ENCODE measurements at regions of chr3 and their contacts with region 1.

Region 1: DNA sequence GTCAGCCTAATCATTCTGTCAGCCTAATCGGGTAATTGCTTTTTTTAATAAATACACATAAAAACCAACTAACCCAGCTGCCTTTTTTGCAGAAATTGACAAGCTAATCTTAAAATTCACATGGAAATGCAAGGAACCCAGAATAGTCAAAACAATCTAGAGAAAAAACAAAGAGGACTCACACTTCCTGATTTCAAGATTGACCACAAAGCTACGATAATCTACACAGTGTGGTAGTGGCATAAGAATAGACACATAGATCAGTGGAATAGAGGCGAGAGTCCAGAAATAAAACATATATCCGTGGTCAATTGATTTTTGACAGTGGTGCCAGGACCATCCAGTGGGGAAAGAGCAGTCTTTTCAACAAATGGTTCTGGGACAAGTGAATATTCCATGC is 2.4 kb upstream of the C3orf20 start:
- DNase-seq: no peak
- ATAC-seq: no peak
- H3K4me3 Mint-ChIP-seq: no peak overlapping the region
- H3K27ac Mint-ChIP-seq: peak overlapping the region; percentile 20
- H3K4me1 Mint-ChIP-seq: no peaks in the 10 kb centered on the region
- H3K27me3 Mint-ChIP-seq: no peaks in the 10 kb centered on the region
- CTCF ChIP-seq: no peak

Region 2: DNA sequence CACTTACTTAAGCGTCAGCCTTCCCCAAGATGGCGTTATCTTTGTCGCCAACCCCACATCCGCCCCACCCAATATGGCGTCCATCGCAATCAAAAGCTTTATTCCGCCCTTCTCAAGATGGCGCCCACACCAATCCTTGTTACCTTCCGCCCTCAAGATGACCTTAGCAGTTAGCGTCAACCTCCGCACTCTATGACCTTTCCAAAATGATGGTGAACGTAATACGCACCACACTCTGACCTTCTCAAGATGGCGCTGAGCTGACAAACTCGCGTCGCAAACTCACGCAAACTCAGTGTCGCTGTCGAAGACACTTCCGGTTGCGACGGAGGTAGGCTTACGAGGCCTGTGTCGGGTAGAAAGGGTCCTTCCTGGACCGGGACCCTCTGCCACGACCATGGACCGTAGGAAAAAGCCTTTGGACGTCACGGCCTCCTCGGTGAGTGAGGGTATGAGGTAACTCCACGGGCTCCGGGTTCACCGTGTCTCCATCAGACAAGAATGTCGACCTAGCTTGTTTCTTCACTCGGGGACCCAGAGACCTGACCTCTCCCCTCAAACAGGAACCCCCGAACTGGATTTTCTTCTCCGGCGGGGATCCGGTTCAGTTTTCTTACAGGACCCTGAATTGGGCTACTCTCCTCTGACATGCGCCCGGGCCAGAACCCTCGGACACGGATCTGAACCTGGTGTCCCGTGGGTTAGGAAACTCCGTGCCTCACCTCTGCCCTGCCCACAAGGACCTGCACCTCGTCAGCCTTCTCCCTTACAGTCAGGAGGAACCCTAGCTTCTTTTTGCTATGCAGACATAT is 20.9 kb before region 1 on chr3 and contains the start of gene CCDC174:
- CTCF ChIA-PET with region 1: interaction called, 3 read pairs
- POLR2A ChIA-PET with region 1: interaction called, 17 read pairs
- intact Hi-C with region 1: no loop called
- DNase-seq: peak; percentile 97
- ATAC-seq: peak; percentile 99
- H3K4me3 Mint-ChIP-seq: peak within 1 kb of the TSS; percentile 97
- H3K27ac Mint-ChIP-seq: peak within 1 kb of the TSS; percentile 98
- H3K4me1 Mint-ChIP-seq: peaks cover 35% of the 10 kb centered on the region
- H3K27me3 Mint-ChIP-seq: no peaks in the 10 kb centered on the region
- CTCF ChIP-seq: no peak
- total RNA-seq, gene CCDC174: 14.2 to 16.2 TPM

Region 3: DNA sequence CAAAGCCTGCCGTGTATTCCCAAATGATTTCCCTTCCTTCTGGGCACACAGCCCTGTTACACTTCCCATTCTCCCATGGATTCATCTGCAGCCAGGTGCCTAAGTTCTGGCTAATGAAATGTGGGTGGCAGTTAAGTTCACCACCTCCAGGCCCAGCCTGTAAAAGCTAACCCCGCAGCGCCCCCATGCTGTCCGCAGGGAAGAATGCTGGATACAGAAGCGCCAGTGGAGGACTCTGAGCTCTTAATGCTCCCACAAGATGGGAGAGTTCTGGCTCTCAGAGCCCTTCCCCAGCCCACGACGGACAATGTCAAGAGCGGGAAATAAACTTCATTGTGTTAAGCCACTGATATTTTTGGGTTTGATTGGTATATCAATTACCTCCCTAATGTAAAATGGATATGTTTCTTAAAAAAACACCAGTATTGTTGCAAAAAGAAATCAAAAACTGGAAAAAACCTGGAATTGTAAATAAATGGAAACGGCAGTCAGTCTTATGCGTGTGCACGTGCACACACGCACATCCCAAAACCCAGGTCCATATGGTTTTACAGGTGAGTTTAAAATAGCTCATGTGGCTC is 108.4 kb after region 1 on chr3:
- CTCF ChIA-PET with region 1: interaction called, 12 read pairs
- POLR2A ChIA-PET with region 1: no interaction called
- intact Hi-C with region 1: no loop called
- DNase-seq: peak; percentile 66
- ATAC-seq: no peak
- H3K4me3 Mint-ChIP-seq: no peak overlapping the region
- H3K27ac Mint-ChIP-seq: no peak overlapping the region
- H3K4me1 Mint-ChIP-seq: no peaks in the 10 kb centered on the region
- H3K27me3 Mint-ChIP-seq: peaks cover 2% of the 10 kb centered on the region
- CTCF ChIP-seq: peak; percentile 69

Region 4: DNA sequence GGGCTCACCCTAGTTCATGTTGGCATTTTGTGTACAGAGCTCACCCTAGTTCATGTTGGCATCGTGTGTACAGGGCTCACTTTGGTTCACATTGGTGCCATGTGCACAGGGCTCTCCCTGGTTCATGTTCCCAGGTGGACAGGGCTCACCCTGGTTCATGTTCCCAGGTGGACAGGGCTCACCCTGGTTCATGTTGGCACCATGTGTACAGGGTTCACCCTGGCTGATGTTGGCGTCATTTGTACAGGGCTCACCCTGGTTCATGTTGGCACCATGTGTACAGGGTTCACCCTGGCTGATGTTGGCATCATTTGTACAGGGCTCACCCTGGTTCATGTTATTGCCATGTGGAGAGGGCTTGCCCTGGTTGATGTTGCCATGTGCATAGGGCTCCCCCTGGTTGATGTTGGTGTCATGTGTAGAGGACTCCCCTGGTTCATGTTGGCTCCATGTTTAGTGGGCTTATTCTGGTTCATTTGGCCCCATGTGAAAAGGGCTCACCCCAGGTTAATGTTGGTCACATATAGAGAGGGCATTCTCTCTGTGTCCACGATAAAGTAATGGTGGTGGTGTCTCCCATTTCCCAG is 243.1 kb after region 1 on chr3:
- CTCF ChIA-PET with region 1: no interaction called
- POLR2A ChIA-PET with region 1: interaction called, 3 read pairs
- intact Hi-C with region 1: loop called (anchors 5 kb)
- DNase-seq: peak; percentile 36
- ATAC-seq: peak; percentile 56
- H3K4me3 Mint-ChIP-seq: no peak overlapping the region
- H3K27ac Mint-ChIP-seq: no peak overlapping the region
- H3K4me1 Mint-ChIP-seq: no peaks in the 10 kb centered on the region
- H3K27me3 Mint-ChIP-seq: no peaks in the 10 kb centered on the region
- CTCF ChIP-seq: no peak